Aorta (tissue), 5 donors: ENCODE measurements at regions of chr15 and their contacts with region 1.

Region 1: GRCh38 chr15:99076552-99077308 is 28.1 kb upstream of the SYNM start:
- DNase-seq: peak in 1 of 2 donors; percentile 63
- ATAC-seq: peak; percentile 90
- H3K4me3 ChIP-seq: peak overlapping the region; percentile 70 to 93
- H3K27ac ChIP-seq: no peak overlapping the region
- H3K4me1 ChIP-seq: no peaks in the 10 kb centered on the region
- H3K27me3 ChIP-seq: no peaks in the 10 kb centered on the region

Region 2: DNA sequence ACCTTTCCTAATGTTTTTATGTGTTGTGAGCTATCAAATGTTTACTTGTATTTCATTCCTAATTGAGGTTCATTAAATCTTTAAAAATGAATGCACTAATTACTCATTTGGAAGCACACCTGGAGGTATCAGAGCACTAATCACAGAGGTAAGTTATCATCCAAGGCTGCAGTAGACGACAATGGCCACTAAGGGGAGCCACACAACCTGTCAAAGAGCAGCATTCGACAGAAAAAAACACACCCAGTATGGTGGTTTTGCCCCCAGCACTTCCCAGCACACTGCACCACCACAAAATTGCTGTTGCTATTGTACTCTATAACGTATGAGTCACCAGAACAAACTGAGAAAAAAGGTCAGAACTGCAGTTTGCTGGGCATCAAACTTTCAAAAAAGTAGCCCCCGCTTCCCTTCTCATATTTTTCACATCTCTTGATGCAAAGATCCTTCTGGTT is 634.3 kb before region 1 on chr15:
- intact Hi-C with region 1: loop called (anchors 2 to 5 kb)
- DNase-seq: no peak
- ATAC-seq: peak; percentile 88
- H3K4me3 ChIP-seq: no peak overlapping the region
- H3K27ac ChIP-seq: no peak overlapping the region
- H3K4me1 ChIP-seq: no peaks in the 10 kb centered on the region
- H3K27me3 ChIP-seq: no peaks in the 10 kb centered on the region

Region 3: DNA sequence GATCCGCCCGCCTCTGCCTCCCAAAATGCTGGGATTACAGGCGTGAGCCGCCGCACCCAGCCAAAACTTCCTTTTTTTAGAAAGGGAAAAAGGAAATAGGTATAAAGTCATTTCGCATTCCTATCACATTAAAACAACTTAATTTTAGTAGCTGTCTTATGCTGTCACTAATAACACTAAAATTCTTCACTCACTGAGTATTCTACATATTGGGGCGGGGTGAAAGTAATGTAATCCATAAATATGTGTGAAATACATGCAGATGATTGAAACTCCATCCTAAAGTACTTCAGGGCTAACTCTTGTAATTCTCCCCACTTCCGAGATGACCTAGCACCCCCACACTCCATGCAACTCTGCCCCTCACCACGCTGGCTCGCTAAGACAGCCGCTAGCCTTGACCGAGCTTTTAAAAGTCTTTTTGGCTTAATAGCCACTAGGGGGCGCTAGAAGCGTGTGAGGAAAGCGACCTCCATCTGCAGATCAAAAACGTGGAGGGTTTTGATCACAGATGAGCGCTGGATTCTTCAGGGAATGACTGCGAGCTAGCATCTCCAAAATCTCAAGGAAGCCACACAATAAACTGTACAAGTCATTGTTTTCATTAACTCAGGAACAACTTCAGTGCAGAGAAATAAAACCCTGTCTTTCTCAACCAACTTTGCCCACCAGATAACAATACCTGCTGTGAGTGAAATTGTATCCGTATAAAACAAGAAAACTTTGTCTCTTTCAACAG is 557.7 kb before region 1 on chr15:
- intact Hi-C with region 1: loop called (anchors 1 to 2 kb)
- DNase-seq: peak; percentile 61 to 75
- ATAC-seq: peak; percentile 90
- H3K4me3 ChIP-seq: no peak overlapping the region
- H3K27ac ChIP-seq: no peak overlapping the region
- H3K4me1 ChIP-seq: no peaks in the 10 kb centered on the region
- H3K27me3 ChIP-seq: no peaks in the 10 kb centered on the region

Region 4: DNA sequence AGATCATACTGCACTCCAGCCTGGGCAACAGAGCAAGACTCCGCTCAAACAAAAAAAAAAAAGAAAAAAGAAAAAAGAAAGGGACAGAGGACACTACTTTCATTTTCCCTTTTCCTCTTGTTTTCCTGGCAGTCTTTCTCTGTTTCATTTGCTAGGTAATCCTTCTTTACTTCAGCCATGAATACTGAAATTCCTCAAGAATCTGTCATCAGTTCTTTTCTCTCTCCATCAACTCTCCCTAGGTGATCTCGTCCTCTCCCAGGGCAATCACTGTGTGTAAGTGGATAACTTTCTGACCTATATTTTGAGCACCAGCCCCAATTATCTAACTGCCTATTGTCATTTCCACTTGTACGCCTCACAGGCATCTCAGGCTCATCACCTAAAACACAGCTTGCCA is 121.1 kb after region 1 on chr15:
- intact Hi-C with region 1: no loop called
- DNase-seq: no peak
- ATAC-seq: no peak
- H3K4me3 ChIP-seq: no peak overlapping the region
- H3K27ac ChIP-seq: no peak overlapping the region
- H3K4me1 ChIP-seq: no peaks in the 10 kb centered on the region
- H3K27me3 ChIP-seq: no peaks in the 10 kb centered on the region